Activated B cell treated with CpG ODN at 0.5 μM for 24 hours (primary cell): ENCODE measurements at regions of chr6 and their contacts with region 1.

Region 1: DNA sequence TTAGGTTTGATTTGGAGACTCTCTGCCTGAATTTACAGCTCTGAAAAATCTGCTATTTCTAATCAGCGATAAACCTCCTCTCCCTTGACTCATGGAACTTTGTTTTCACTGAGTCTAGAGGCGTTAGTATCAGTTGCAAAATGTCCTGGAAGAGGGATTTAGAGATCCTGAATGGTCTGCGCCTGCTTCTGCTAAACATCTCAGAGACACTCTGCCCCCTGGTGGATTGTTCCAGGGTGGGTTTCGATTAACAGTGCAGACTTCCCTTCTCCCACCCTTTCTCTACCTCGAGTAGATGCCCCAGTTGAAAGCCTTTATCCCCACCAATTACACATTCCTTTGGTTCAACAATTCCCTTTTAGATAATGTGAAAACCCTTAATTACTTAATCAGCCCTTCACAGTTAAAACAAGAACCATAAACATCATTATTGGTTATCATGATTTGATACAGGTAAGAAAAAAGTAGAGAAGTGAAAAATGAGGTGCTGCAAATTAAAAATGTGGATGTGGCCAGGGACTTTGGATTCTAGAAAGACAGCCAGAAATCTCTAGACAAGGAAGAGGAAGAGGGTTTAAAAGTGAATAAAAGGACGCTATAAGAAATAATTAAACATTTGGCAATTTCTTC is 5.5 kb downstream of the HTR1B start:
- DNase-seq: no peak
- ATAC-seq: peak; percentile 40
- H3K4me3 Mint-ChIP-seq: no peak overlapping the region
- H3K27ac Mint-ChIP-seq: no peak overlapping the region
- H3K4me1 Mint-ChIP-seq: no peaks in the 10 kb centered on the region
- H3K27me3 Mint-ChIP-seq: peaks cover 23% of the 10 kb centered on the region
- CTCF ChIP-seq: no peak

Region 2: GRCh38 chr6:75893058-75893775 is 1564.6 kb before region 1 on chr6:
- CTCF ChIA-PET with region 1: interaction called, 12 read pairs
- POLR2A ChIA-PET with region 1: no interaction called
- intact Hi-C with region 1: loop called (anchors 1 kb)
- DNase-seq: no peak
- ATAC-seq: no peak
- H3K4me3 Mint-ChIP-seq: no peak overlapping the region
- H3K27ac Mint-ChIP-seq: no peak overlapping the region
- H3K4me1 Mint-ChIP-seq: no peaks in the 10 kb centered on the region
- H3K27me3 Mint-ChIP-seq: peaks cover 2% of the 10 kb centered on the region
- CTCF ChIP-seq: peak; percentile 47

Region 3: DNA sequence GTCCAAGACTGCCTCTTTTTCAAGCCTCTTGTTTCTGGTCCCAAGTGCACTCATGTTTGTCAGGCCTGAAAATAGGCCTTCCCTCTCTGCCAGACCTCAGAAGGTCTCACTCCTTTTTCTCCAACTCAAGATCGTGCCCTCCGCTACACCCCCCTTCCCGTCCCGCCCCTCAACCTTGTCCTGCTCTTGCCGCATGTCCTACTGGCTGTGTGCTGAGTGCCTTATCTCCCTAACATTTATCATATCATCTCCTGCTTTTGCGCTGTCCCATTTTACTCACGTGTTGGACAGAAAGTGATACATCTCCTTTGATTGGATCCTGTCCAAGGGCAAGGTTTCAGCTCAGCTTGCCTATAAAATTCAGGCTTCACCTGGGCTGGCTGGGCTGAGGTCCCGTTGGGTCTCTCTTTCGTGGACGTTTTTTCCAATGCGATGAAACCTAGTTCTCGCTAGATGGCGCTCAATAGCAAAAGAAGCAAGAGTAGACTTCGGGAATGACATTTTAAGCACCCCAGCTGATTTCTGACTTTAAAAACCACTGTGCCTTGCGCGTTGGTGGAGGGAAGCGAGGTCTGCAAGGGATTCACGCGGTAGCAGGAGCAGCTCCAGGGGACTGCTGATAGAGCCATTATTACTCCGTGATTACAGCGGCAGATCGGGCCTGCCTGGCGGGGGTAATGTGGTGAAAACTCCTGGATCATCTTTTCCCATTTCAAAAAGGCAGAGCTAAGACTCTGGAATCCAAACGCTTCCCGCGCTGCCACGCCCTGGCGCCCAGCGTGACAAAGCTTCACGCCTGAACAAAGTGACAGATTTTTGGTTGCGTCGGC is 1523.0 kb before region 1 on chr6:
- CTCF ChIA-PET with region 1: interaction called, 6 read pairs
- POLR2A ChIA-PET with region 1: no interaction called
- intact Hi-C with region 1: loop called (anchors 1 kb)
- DNase-seq: no peak
- ATAC-seq: peak; percentile 37
- H3K4me3 Mint-ChIP-seq: peak overlapping the region; percentile 74
- H3K27ac Mint-ChIP-seq: no peak overlapping the region
- H3K4me1 Mint-ChIP-seq: peaks cover 8% of the 10 kb centered on the region
- H3K27me3 Mint-ChIP-seq: peaks cover 16% of the 10 kb centered on the region
- CTCF ChIP-seq: peak; percentile 59

Region 4: DNA sequence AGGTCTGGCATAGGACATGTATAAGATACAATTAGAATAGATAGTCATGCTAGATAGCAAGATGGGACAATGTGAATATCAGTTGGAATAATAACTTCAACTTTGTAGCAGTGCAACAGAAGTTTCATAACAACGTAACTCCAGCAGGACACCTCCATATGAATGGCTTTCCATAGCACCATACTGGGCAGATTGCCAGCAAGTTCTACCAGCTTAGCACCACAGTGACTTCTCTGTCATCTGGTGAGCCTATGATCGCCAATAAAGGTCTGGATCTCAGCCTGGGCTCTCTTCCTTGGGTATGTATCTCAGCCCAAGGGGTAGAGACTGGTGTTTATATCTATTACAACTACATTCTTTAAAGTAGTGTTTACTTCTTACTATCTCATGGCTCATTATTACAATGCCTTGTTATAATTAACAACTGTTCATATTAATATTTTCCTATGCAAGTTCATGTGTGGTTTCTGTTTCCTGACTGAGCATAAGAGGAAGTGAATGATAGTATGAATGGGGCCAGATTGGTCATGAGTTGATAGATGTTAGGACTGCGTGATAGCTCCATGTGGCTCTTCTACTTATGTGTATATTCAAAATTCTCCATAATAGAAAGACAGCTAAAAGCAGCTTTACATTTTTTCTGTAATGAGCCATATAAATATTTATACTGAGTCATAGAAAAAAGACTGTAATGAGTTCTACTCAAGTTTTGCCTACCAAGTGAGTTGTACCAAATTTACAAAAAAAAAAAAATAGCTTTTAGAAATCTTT is 17.4 kb before region 1 on chr6:
- CTCF ChIA-PET with region 1: no interaction called
- POLR2A ChIA-PET with region 1: no interaction called
- intact Hi-C with region 1: no loop called
- DNase-seq: no peak
- ATAC-seq: no peak
- H3K4me3 Mint-ChIP-seq: no peak overlapping the region
- H3K27ac Mint-ChIP-seq: no peak overlapping the region
- H3K4me1 Mint-ChIP-seq: no peaks in the 10 kb centered on the region
- H3K27me3 Mint-ChIP-seq: no peaks in the 10 kb centered on the region
- CTCF ChIP-seq: no peak